ENCODE measurements at regions of chr11 and their contacts with region 1.

Region 1: DNA sequence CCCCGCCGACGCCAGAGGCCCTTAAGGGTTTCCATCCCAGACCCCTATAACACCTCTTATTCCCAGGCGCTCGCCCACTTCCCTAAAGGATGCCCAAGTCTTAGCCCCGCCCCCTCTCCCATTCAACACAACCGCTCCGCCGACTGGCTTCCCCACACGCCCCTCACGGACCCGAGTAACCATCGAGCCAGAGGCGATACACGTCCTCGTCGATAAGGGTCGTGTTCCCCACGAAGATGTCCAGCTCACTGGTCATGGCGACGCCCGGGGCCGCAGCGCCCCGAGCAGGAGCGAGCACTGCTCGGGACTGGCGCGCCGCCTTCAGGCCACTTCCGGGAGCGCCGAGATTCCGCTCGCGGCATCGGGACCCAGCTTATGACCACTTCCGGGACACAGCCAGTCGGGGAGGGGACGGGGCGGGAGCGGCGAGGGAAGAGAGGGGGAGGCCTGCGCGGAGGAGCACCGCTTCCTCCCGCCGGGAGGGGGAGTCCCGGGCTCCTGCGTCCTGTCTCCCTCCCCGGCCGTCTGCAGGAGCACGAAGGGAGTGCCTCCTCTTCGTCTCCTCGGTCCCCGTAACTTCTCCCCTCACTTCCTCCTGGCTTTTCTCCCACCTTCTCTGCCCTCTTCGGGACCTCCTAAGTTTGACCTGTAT is at the start of gene FIBP:
- DNase-seq: peak; percentile 98
- ATAC-seq: peak; percentile 64
- H3K4me3 Mint-ChIP-seq: peak within 1 kb of the TSS; percentile 97
- H3K27ac Mint-ChIP-seq: peak within 1 kb of the TSS; percentile 98
- H3K4me1 Mint-ChIP-seq: peaks cover 44% of the 10 kb centered on the region
- H3K27me3 Mint-ChIP-seq: peaks cover 15% of the 10 kb centered on the region
- CTCF ChIP-seq: peak; percentile 57
- total RNA-seq, gene FIBP: 91.6 to 93.1 TPM (median 92.2 TPM) in 3 replicates

Region 2: GRCh38 chr11:65471410-65471762 is 416.9 kb before region 1 on chr11:
- CTCF ChIA-PET with region 1: no interaction called
- POLR2A ChIA-PET with region 1: no interaction called
- DNase-seq: peak; percentile 69
- ATAC-seq: peak; percentile 87
- H3K4me3 Mint-ChIP-seq: no peak overlapping the region
- H3K27ac Mint-ChIP-seq: no peak overlapping the region
- H3K4me1 Mint-ChIP-seq: peaks cover 2% of the 10 kb centered on the region
- H3K27me3 Mint-ChIP-seq: peaks cover 11% of the 10 kb centered on the region
- CTCF ChIP-seq: 0 out of 2 replicates have a peak, but pooled peaks have one; percentile 16

Region 3: DNA sequence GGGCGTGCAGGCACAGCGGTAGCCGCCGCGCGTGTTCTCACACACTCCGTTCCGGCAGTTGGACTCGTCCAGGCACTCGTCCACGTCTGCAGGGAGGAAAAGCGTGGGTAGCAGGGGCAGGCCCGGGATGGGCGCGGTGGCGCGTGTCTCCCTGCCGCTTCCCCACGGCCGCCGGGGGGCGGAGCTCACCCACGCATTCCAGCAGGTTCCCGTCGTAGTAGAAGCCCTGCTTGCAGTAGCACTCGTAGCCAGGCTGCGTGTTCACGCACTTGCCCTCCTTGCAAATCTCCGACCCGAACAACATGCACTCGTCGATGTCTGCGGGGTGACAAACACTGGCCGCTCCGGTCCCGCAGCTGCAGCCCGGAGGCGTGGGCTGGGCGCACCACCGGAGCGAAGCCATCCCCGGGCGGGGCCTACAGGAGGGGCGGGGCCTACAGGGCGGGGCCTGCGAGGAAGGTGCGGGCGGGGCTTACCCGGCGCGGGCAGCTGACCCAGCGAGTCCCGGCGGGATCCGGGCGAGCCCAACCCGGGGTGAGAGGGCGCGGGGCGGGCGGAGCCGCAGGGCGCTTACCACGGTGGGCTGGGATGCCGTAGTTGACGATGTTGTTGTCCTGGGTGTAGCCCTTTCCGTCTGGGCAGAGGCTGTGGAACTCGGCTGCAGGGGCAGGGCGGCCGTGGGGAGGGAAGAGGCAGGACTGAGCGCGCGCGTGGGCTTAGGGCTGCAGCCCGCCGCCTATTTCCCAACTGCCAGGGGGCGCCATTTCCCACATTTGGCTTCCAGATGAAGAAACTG is 347.8 kb before region 1 on chr11:
- CTCF ChIA-PET with region 1: no interaction called
- POLR2A ChIA-PET with region 1: no interaction called
- DNase-seq: peak; percentile 93
- ATAC-seq: peak; percentile 83
- H3K4me3 Mint-ChIP-seq: peak overlapping the region; percentile 68
- H3K27ac Mint-ChIP-seq: no peak overlapping the region
- H3K4me1 Mint-ChIP-seq: peaks cover 3% of the 10 kb centered on the region
- H3K27me3 Mint-ChIP-seq: peaks cover 60% of the 10 kb centered on the region
- CTCF ChIP-seq: peak; percentile 92

Region 4: GRCh38 chr11:65711785-65712632 is 176.3 kb before region 1 on chr11 and contains the start of gene KAT5:
- CTCF ChIA-PET with region 1: interaction called, 31 read pairs
- POLR2A ChIA-PET with region 1: interaction called, 9 read pairs
- DNase-seq: peak; percentile 99
- ATAC-seq: peak; percentile 93
- H3K4me3 Mint-ChIP-seq: peak within 1 kb of the TSS; percentile 82
- H3K27ac Mint-ChIP-seq: peak within 1 kb of the TSS; percentile 96
- H3K4me1 Mint-ChIP-seq: 0 out of 2 replicates have a peak, but pooled peaks cover 3% of the 10 kb centered on the region
- H3K27me3 Mint-ChIP-seq: peaks cover 6% of the 10 kb centered on the region
- CTCF ChIP-seq: peak; percentile 86
- total RNA-seq, gene KAT5: 44.9 to 56.6 TPM (median 46.0 TPM) in 3 replicates

Region 5: DNA sequence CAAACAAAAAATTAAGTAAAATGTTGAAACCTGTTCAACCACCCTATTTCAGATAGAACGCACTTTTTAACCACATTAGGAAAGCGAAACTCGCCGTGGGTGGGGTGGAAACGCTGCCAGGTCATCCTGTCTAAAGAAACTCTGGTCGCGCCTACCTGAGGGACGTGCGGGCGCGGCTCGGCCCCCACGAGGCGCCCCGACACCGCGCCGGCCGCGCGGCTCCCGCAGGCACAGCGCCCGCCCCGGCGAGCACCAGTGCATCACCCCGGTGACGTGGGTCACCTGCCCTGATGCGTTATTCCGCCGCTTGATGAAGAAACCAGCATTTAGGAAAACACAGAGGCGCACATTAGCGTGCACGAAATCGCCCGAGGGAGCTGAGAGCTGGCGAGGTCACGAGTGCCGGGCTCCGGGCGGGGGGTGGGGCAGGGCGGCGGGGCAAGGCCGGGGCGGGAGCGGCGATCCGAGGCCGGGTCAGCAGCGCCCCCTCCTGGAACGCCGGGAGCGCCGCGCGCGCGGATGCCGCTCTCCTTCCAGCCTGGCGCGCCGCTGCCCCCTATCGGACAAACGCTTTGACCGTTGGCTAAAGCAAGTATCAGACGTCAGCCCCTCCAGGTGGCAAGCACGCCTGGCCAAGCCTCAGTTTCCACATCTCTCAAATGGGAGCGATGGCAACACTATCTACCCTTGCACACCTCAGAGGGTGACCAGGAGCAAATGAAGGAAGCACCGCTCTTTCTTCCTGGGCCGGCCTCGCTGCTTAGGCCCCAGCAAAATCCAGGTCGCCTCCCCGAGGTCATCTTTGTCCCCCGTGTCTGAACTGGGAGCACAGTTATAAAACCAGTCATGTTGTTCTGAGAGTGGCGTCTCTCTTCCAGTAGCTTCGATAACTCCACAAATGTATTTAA is 70.2 kb before region 1 on chr11:
- CTCF ChIA-PET with region 1: interaction called, 13 read pairs
- POLR2A ChIA-PET with region 1: no interaction called
- DNase-seq: peak; percentile 96
- ATAC-seq: peak; percentile 87
- H3K4me3 Mint-ChIP-seq: peak overlapping the region; percentile 72
- H3K27ac Mint-ChIP-seq: no peak overlapping the region
- H3K4me1 Mint-ChIP-seq: 0 out of 2 replicates have a peak, but pooled peaks cover 5% of the 10 kb centered on the region
- H3K27me3 Mint-ChIP-seq: peaks cover 15% of the 10 kb centered on the region
- CTCF ChIP-seq: peak; percentile 100

Region 6: GRCh38 chr11:65873318-65874156 is 14.8 kb before region 1 on chr11:
- CTCF ChIA-PET with region 1: interaction called, 539 read pairs
- POLR2A ChIA-PET with region 1: interaction called, 6 read pairs
- DNase-seq: peak; percentile 97
- ATAC-seq: peak; percentile 84
- H3K4me3 Mint-ChIP-seq: peak overlapping the region; percentile 88
- H3K27ac Mint-ChIP-seq: no peak overlapping the region; the same call in 1 of the 2 replicates
- H3K4me1 Mint-ChIP-seq: peaks cover 2% of the 10 kb centered on the region; the same call in 1 of the 2 replicates
- H3K27me3 Mint-ChIP-seq: peaks cover 55% of the 10 kb centered on the region
- CTCF ChIP-seq: no peak

Region 7: DNA sequence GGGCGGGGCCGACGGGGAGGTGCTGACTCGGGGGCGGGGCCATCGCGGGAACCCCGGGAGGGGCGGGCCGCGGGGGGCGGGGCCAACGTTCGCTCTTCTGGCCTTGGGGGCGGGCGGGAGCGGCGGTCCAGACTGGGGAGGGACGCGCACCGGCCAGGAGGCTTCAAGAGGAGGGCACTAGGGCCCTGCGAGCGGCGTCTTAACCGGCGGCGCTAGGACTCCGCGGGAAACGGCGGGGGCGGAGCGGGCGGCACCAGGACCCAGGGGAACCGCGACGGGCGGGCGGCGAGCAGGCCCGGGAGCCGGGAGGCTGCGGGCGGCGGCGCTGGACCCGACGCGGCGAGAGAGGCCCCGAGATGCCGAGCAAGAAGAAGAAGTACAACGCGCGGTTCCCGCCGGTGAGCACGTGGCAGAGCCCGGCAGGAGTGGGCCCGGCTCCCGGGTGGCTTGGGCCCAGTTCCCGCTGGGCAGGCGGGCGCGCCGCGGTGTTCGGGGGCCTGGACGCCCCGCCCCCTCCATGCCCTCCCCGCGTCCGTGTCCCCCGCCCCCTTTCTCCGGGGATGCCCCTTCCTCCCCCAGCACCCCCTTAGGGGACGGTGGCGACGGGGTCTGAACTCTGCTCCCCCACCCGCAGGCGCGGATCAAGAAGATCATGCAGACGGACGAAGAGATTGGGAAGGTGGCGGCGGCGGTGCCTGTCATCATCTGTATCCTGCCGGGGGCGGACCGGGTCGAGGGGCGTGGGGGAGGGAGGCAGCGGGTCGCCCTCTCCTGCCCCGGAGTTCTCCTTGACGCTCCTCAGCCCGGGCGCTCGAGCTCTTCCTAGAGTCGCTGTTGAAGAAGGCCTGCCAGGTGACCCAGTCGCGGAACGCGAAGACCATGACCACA is 31.1 kb after region 1 on chr11 and contains the start of gene DRAP1:
- CTCF ChIA-PET with region 1: interaction called, 23 read pairs
- POLR2A ChIA-PET with region 1: interaction called, 12 read pairs
- DNase-seq: peak; percentile 99
- ATAC-seq: peak; percentile 90
- H3K4me3 Mint-ChIP-seq: peak within 1 kb of the TSS; percentile 83
- H3K27ac Mint-ChIP-seq: peak within 1 kb of the TSS; percentile 11
- H3K4me1 Mint-ChIP-seq: peaks cover 18% of the 10 kb centered on the region
- H3K27me3 Mint-ChIP-seq: peaks cover 3% of the 10 kb centered on the region; the same call in 1 of the 2 replicates
- CTCF ChIP-seq: no peak
- total RNA-seq, gene DRAP1: 111 to 129 TPM (median 114 TPM) in 3 replicates

Region 8: DNA sequence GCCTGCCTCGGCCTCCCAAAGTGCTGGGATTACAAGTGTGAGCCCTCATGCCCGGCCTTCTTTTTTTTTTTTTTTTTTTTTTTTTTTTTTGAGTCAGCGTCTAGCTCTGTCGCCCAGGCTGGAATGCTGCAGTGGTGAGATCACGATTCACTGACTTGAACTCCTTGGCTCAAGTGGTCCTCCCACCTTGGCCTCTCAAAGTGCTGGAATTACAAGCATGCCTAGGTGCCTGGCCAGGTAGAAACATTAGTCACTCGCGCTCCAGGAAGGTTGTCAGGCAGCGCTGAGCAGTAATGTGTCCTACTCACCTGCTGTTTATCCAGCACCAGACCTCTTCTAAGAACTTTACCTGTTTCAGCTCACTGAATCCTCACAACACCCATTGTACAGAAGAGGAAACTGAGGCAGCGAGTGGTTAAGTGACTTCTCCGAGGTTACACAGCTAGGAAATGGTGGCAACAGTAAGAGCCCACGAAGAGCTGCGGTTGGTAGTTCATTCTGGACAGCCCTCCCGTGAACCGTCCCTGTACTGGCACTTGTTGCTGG is 123.0 kb after region 1 on chr11:
- CTCF ChIA-PET with region 1: interaction called, 18 read pairs
- POLR2A ChIA-PET with region 1: interaction called, 3 read pairs
- DNase-seq: no peak
- ATAC-seq: no peak
- H3K4me3 Mint-ChIP-seq: peak overlapping the region; percentile 30; the same call in 1 of the 2 replicates
- H3K27ac Mint-ChIP-seq: no peak overlapping the region
- H3K4me1 Mint-ChIP-seq: peaks cover 8% of the 10 kb centered on the region; the same call in 1 of the 2 replicates
- H3K27me3 Mint-ChIP-seq: peaks cover 22% of the 10 kb centered on the region
- CTCF ChIP-seq: no peak

Region 9: GRCh38 chr11:66119348-66120133 is 231.3 kb after region 1 on chr11:
- CTCF ChIA-PET with region 1: no interaction called
- POLR2A ChIA-PET with region 1: no interaction called
- DNase-seq: no peak
- ATAC-seq: peak; percentile 85
- H3K4me3 Mint-ChIP-seq: no peak overlapping the region
- H3K27ac Mint-ChIP-seq: no peak overlapping the region
- H3K4me1 Mint-ChIP-seq: peaks cover 26% of the 10 kb centered on the region
- H3K27me3 Mint-ChIP-seq: no peaks in the 10 kb centered on the region
- CTCF ChIP-seq: no peak